OCI-LY7 (cell line): ENCODE measurements at regions of chr1 and their contacts with region 1.

Region 1: GRCh38 chr1:77271852-77272580 is 9.8 kb upstream of the AK5 start:
- DNase-seq: no peak
- H3K4me3 ChIP-seq: no peak overlapping the region
- H3K27ac ChIP-seq: no peak overlapping the region
- H3K4me1 ChIP-seq: no peaks in the 10 kb centered on the region
- CTCF ChIP-seq: no peak

Region 2: DNA sequence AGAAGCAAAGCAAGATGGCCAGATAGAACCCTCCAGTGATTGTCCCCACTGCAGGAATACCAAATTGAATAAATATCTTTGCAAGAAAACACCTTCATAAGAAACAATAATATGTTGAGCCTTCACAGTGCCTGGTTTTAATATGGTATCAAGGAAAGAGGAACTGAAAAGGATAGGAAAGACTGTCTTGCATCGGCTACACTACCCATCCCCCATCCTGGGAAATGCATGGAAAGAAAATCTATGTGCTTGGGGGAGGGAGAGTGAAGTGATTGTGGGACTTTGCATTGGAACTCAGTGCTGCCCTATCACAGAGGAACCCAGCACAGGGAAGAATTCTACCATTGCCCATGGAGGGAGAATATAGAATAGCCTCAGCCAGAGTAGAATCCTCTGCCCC is 18.8 kb before region 1 on chr1:
- CTCF ChIA-PET with region 1: no interaction called
- POLR2A ChIA-PET with region 1: no interaction called
- intact Hi-C with region 1: no loop called
- DNase-seq: no peak
- H3K4me3 ChIP-seq: no peak overlapping the region
- H3K27ac ChIP-seq: no peak overlapping the region
- H3K4me1 ChIP-seq: no peaks in the 10 kb centered on the region
- CTCF ChIP-seq: no peak

Region 3: GRCh38 chr1:77303387-77303786 is 31.4 kb after region 1 on chr1:
- CTCF ChIA-PET with region 1: no interaction called
- POLR2A ChIA-PET with region 1: interaction called, 3 read pairs
- intact Hi-C with region 1: loop called (anchors 5 kb)
- DNase-seq: no peak
- H3K4me3 ChIP-seq: no peak overlapping the region
- H3K27ac ChIP-seq: no peak overlapping the region
- H3K4me1 ChIP-seq: no peaks in the 10 kb centered on the region
- CTCF ChIP-seq: no peak